ENCODE measurements at regions of chr12 and their contacts with region 1.

Region 1: DNA sequence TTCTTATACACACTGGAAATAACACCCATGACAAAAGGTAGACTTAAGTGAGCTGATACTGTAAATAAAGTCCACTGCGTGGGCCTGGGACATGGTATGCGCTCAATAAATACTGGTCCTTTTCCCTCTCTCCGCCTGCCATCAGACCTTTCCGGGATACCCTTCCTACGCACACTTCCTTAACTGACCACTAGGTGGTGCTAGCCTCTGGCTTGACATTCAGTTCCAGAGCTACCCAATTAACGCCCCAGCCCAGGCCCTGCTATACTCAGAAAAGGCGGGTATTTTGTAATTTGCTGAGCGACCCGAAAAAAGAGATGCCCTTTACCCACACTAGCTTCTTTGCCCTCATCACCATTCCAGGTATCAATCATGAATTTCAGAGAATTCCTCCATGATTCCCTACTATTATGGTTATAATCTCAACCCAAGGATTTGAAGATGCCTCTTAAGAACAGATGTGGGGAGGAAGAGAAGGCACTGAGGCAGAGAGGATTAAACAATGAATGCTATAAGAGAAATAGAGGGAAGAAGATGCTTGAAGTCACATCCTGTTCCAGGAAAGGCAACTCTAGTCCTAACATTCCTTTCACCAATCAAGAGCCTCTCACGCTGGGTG is 3.9 kb upstream of the LRP1 start:
- DNase-seq: peak; percentile 83 to 85
- H3K4me3 ChIP-seq: no peak overlapping the region
- H3K27ac ChIP-seq: no peak overlapping the region
- H3K4me1 ChIP-seq: peaks cover 0 to 13% (median 8%) of the 10 kb centered on the region in 4 donors
- H3K27me3 ChIP-seq: no peaks in the 10 kb centered on the region
- CTCF ChIP-seq: peak; percentile 95 to 97

Region 2: GRCh38 chr12:57175428-57176138 is 51.2 kb after region 1 on chr12:
- intact Hi-C with region 1: loop called (anchors 2 kb)
- DNase-seq: peak; percentile 89 to 93
- H3K4me3 ChIP-seq: no peak overlapping the region
- H3K27ac ChIP-seq: peak overlapping the region; percentile 10 to 31
- H3K4me1 ChIP-seq: peaks cover 0 to 19% (median 6%) of the 10 kb centered on the region in 4 donors
- H3K27me3 ChIP-seq: no peaks in the 10 kb centered on the region
- CTCF ChIP-seq: peak; percentile 83 to 90

Region 3: DNA sequence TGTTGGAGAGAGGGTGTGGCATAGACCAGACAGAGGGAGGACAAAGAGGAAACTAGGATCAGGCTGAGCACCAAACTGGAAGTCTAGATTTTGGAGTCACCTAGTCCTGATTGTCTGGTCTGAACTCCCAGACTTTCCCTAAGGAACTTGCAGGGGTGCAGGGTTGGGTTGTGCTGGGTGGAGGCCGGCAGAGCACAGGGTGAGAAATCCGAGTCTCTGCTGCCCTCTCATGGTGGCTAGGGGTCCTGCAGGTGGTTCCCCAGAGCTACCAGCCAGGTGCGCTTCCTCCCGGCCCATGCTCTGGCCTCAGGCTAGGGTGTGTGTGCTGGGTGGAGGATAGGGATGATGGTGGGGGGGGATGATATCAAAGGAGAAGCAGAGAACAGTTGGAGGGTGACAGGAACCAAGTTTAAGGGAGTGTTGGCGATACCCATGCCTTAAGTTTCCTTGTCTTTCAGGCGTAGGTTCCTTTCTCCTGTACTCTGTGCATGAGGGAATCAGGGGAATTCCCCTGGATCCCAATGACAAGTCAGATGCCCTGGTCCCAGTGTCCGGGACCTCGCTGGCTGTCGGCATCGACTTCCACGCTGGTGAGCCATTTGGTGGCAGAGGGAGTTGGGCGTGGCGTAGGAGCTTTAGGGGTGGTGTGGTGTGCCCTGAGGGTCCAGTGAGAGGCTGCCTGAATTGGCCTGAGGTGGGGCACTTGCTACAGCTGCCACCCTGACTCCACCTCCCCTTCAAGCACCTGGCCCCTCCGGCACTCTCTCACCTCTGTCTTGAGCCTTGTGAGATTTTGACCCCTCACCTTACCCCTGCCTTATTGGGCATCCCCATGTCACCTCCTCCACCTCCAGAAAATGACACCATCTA is 58.8 kb after region 1 on chr12:
- intact Hi-C with region 1: loop called (anchors 2 kb)
- DNase-seq: peak; percentile 63 to 81
- H3K4me3 ChIP-seq: no peak overlapping the region
- H3K27ac ChIP-seq: peak overlapping the region in 1 of 2 donors; percentile 19
- H3K4me1 ChIP-seq: no peaks in the 10 kb centered on the region
- H3K27me3 ChIP-seq: no peaks in the 10 kb centered on the region
- CTCF ChIP-seq: peak; percentile 85 to 95

Measured in tibial artery (tissue), 4 donors.